ENCODE measurements at regions of chr14 and their contacts with region 1.

Region 1: DNA sequence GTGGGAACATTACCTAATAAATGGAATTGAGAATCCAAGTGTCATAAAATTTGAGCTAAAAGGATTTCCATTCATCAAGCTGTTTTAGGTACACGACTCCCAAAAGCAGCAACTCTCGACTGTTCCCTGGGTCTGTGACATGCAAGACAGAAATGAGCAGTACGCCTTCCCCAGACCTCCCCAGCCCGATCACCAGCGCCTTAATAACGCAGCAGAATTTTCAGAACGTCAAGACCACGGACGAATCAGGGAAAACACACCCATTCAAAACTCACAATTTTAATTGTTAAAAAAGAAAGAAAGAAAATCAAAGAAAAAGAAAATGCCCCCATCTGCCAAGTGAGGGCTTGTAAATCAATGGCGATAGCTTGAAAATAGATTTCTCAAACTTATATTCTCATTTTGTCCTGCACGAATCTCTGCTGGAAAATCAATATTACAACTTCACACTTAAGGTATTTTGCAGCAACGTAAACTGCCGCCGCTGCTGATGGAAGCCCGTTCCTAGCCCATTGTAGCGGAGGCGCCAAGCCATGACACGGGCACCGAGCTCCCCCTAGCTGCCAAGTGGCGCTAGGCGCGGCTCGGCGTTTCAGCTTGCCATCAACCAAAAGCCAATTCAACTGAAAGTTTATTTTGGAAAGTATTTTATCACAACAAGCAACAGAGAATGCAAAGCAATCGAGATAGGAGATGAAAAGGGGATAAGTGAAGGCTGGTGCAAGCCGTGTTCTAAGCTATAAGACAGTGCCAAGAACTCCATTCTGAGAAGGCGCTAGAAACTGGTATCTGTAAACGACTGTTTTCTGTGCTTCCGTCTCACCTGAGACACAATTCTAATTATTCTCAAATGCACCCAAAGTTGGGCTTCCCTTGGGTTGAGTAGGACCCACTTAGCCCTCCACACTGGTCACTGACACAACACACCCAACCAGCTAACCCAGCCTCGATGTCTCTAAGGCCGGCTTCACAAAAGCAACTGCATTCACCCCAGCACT is 5.5 kb downstream of the BCL11B start:
- DNase-seq: peak; percentile 81 to 95
- ATAC-seq: peak; percentile 69 to 77 (median 71)
- H3K4me3 ChIP-seq: peak overlapping the region; percentile 16
- H3K4me3 Mint-ChIP-seq: peak overlapping the region; percentile 95
- H3K27ac ChIP-seq: peak overlapping the region; percentile 53
- H3K27ac Mint-ChIP-seq: peak overlapping the region; percentile 90 to 97
- H3K4me1 ChIP-seq: peaks cover 60% of the 10 kb centered on the region
- H3K4me1 Mint-ChIP-seq: peaks cover 80 to 83% of the 10 kb centered on the region in 2 donors
- H3K27me3 ChIP-seq: no peaks in the 10 kb centered on the region
- H3K27me3 Mint-ChIP-seq: no peaks in the 10 kb centered on the region
- CTCF ChIP-seq: peak; percentile 99

Region 2: GRCh38 chr14:97978341-97978740 is 1288.1 kb before region 1 on chr14:
- intact Hi-C with region 1: loop called (anchors 2 kb)
- DNase-seq: peak in 1 of 2 donors; percentile 88
- ATAC-seq: peak; percentile 52 to 82 (median 54)
- H3K4me3 ChIP-seq: no peak overlapping the region
- H3K4me3 Mint-ChIP-seq: peak overlapping the region; percentile 29
- H3K27ac ChIP-seq: no peak overlapping the region
- H3K27ac Mint-ChIP-seq: no peak overlapping the region
- H3K4me1 ChIP-seq: no peaks in the 10 kb centered on the region
- H3K4me1 Mint-ChIP-seq: no peaks in the 10 kb centered on the region
- H3K27me3 ChIP-seq: no peaks in the 10 kb centered on the region
- H3K27me3 Mint-ChIP-seq: peaks cover 8 to 16% of the 10 kb centered on the region in 2 donors
- CTCF ChIP-seq: no peak

Region 3: DNA sequence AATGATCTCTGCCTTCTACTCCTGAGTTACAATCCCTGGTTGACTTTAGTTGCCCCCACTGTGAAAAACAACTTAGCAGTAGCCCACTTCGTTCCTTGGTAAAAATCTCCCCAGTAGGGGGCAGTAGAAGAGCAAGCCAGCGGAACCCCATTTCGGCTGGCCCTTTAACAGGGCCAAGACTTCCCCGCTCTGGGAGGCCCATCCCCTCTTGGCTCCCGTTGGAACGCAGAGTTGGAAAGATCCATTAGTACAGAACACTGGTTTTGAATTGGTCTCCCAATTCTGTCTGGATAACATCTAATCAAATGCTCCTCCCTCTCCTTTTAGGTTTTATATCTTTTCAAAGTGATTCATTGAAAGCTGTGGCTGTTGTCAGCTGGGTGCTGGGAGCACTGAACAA is 1127.8 kb before region 1 on chr14:
- intact Hi-C with region 1: loop called (anchors 1 kb)
- DNase-seq: peak; percentile 27 to 91
- ATAC-seq: peak; percentile 66 to 77 (median 67)
- H3K4me3 ChIP-seq: no peak overlapping the region
- H3K4me3 Mint-ChIP-seq: no peak overlapping the region
- H3K27ac ChIP-seq: peak overlapping the region; percentile 37
- H3K27ac Mint-ChIP-seq: peak overlapping the region in 1 of 2 donors; percentile 39
- H3K4me1 ChIP-seq: peaks cover 18% of the 10 kb centered on the region
- H3K4me1 Mint-ChIP-seq: peaks cover 22 to 31% of the 10 kb centered on the region in 2 donors
- H3K27me3 ChIP-seq: no peaks in the 10 kb centered on the region
- H3K27me3 Mint-ChIP-seq: peaks cover 0 to 9% of the 10 kb centered on the region in 2 donors
- CTCF ChIP-seq: peak; percentile 76

Region 4: GRCh38 chr14:99055816-99056215 is 210.7 kb before region 1 on chr14:
- intact Hi-C with region 1: loop called (anchors 5 kb)
- DNase-seq: peak; percentile 59 to 77
- ATAC-seq: peak; percentile 89 to 96 (median 92)
- H3K4me3 ChIP-seq: no peak overlapping the region
- H3K4me3 Mint-ChIP-seq: peak overlapping the region; percentile 81
- H3K27ac ChIP-seq: peak overlapping the region; percentile 18
- H3K27ac Mint-ChIP-seq: peak overlapping the region; percentile 78 to 87
- H3K4me1 ChIP-seq: peaks cover 12% of the 10 kb centered on the region
- H3K4me1 Mint-ChIP-seq: peaks cover 31 to 33% of the 10 kb centered on the region in 2 donors
- H3K27me3 ChIP-seq: no peaks in the 10 kb centered on the region
- H3K27me3 Mint-ChIP-seq: peaks cover 0 to 2% of the 10 kb centered on the region in 2 donors
- CTCF ChIP-seq: no peak

Region 5: GRCh38 chr14:99230208-99231151 is 36.0 kb before region 1 on chr14:
- intact Hi-C with region 1: loop called (anchors 2 kb)
- DNase-seq: peak; percentile 78 to 93
- ATAC-seq: peak; percentile 80 to 85 (median 84)
- H3K4me3 ChIP-seq: no peak overlapping the region
- H3K4me3 Mint-ChIP-seq: peak overlapping the region; percentile 82
- H3K27ac ChIP-seq: peak overlapping the region; percentile 81
- H3K27ac Mint-ChIP-seq: peak overlapping the region; percentile 94 to 96
- H3K4me1 ChIP-seq: peaks cover 97% of the 10 kb centered on the region
- H3K4me1 Mint-ChIP-seq: peaks cover 80 to 88% of the 10 kb centered on the region in 2 donors
- H3K27me3 ChIP-seq: no peaks in the 10 kb centered on the region
- H3K27me3 Mint-ChIP-seq: no peaks in the 10 kb centered on the region
- CTCF ChIP-seq: no peak